CD14-positive monocyte (primary cell): ENCODE measurements at regions of chr12 and their contacts with region 1.

Region 1: DNA sequence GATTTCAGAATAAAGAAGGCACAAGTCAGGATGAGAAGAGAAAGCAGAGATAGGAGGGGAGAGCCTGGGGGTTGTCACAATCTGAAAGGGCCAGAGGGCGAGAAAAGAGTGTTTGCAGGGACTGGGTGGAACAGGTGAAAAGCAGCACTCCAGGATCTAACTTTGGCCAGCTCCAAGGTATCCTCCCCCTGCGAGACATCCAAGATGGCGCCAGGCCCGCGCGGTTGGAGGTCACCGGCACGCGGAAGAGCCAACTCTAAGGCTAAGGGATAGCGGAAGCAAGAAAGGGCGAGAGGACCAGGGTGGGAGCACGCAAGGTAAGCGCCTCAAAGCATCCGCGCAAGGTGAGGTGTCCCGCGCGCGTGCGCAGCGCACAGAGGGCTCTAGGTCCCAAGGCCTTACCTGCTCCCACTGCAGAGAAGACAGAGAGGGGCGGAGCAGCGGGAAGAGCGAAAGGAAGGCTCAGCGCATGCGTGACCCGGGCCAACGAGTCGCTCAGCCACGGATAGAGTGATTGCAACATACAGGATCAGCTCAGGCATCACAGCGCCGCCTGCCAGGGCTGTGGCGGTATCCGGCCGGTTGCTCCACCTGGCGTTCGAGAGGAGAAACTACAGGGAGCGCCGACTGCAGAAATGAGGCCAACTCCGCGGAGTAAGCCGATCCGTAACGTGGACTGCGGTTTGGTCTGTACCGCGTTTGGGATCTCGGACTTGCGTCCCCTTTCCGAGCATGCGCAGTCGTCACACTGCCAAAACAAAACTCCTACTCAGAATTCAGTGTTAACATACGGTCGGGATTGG is at the start of gene ATP5MC2:
- DNase-seq: peak; percentile 98 to 99 (median 99)
- H3K4me3 ChIP-seq: peak within 1 kb of the TSS; percentile 54 to 87 (median 78)
- H3K4me3 Mint-ChIP-seq: peak within 1 kb of the TSS; percentile 96 to 99
- H3K27ac ChIP-seq: peak within 1 kb of the TSS; percentile 81 to 96
- H3K27ac Mint-ChIP-seq: peak within 1 kb of the TSS; percentile 96 to 99 (median 97)
- H3K4me1 ChIP-seq: peaks cover 16 to 28% of the 10 kb centered on the region in 2 donors
- H3K4me1 Mint-ChIP-seq: peaks cover 31% of the 10 kb centered on the region
- H3K27me3 ChIP-seq: peaks cover 7 to 9% of the 10 kb centered on the region in 2 donors
- H3K27me3 Mint-ChIP-seq: peaks cover 10 to 28% (median 10%) of the 10 kb centered on the region in 3 donors
- CTCF ChIP-seq: peak; percentile 98
- polyA plus RNA-seq, gene ATP5MC2: 498 to 587 (median 522) TPM

Region 2: GRCh38 chr12:53451661-53452158 is 224.1 kb before region 1 on chr12 and contains the start of gene PCBP2:
- intact Hi-C with region 1: loop called in 1 of 2 experiments (anchors 5 kb)
- DNase-seq: peak; percentile 98 to 99 (median 98)
- H3K4me3 ChIP-seq: peak within 1 kb of the TSS; percentile 80 to 95 (median 87)
- H3K4me3 Mint-ChIP-seq: peak within 1 kb of the TSS; percentile 94 to 99
- H3K27ac ChIP-seq: peak within 1 kb of the TSS; percentile 85 to 91
- H3K27ac Mint-ChIP-seq: peak within 1 kb of the TSS; percentile 96 to 99 (median 99)
- H3K4me1 ChIP-seq: peaks cover 12 to 17% of the 10 kb centered on the region in 2 donors
- H3K4me1 Mint-ChIP-seq: peaks cover 19% of the 10 kb centered on the region
- H3K27me3 ChIP-seq: no peaks in the 10 kb centered on the region
- H3K27me3 Mint-ChIP-seq: peaks cover 0 to 4% (median 0%) of the 10 kb centered on the region in 3 donors
- CTCF ChIP-seq: peak; percentile 81
- polyA plus RNA-seq, gene PCBP2: 79.6 to 588 (median 81.9) TPM

Region 3: GRCh38 chr12:53543539-53543938 is 132.3 kb before region 1 on chr12:
- intact Hi-C with region 1: loop called (anchors 1 to 5 kb)
- DNase-seq: peak; percentile 35 to 51 (median 37)
- H3K4me3 ChIP-seq: no peak overlapping the region
- H3K4me3 Mint-ChIP-seq: no peak overlapping the region
- H3K27ac ChIP-seq: peak overlapping the region in 1 of 2 donors; percentile 67
- H3K27ac Mint-ChIP-seq: peak overlapping the region in 4 of 7 donors; percentile 30 to 73 (median 38)
- H3K4me1 ChIP-seq: no peaks in the 10 kb centered on the region
- H3K4me1 Mint-ChIP-seq: peaks cover 2% of the 10 kb centered on the region
- H3K27me3 ChIP-seq: no peaks in the 10 kb centered on the region
- H3K27me3 Mint-ChIP-seq: no peaks in the 10 kb centered on the region
- CTCF ChIP-seq: peak; percentile 79

Region 4: GRCh38 chr12:53601296-53601847 is 74.5 kb before region 1 on chr12:
- intact Hi-C with region 1: loop called in 1 of 2 experiments (anchors 5 kb)
- DNase-seq: no peak
- H3K4me3 ChIP-seq: peak overlapping the region; percentile 25 to 75 (median 58)
- H3K4me3 Mint-ChIP-seq: peak overlapping the region; percentile 82 to 92
- H3K27ac ChIP-seq: peak overlapping the region in 1 of 2 donors; percentile 64
- H3K27ac Mint-ChIP-seq: peak overlapping the region in 6 of 7 donors; percentile 31 to 78 (median 60)
- H3K4me1 ChIP-seq: peaks cover 25 to 29% of the 10 kb centered on the region in 2 donors
- H3K4me1 Mint-ChIP-seq: peaks cover 41% of the 10 kb centered on the region
- H3K27me3 ChIP-seq: no peaks in the 10 kb centered on the region
- H3K27me3 Mint-ChIP-seq: no peaks in the 10 kb centered on the region
- CTCF ChIP-seq: no peak

Region 5: DNA sequence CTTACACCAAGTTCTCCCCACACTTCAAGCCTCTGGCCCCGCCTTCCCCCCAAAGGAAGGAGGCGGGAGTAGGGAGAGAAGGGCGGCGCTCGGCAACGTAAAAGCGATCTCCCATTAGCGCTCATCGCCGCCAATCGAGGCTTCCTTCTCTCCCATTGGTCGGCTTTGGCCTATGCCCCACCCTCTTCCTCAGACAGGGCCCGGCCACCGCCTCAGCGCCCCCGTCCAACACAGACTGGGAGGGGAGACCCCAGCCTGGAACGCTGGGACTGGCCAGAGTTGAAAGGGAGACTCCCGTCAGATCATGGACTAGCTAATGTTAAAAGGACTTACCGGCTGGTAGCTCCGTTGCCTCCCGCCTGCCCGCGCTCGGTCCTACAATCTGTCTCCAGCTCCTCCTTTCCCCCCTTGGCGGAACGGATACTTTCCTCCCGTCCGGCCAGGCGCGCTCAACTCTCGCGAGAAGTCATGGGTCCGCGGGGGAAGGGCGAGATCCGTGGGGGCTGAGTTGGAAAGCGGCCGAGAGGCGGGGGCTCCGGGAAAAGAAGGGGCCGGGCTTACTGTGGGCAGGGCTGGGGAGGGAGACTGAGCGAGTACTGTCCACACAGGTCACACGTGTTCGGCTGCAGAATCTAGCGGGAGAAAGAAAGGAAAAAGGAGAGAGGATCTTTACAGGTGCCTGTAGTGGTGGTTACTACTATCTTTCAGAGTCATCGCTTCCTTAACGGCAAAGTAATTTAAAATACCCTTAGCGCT is 49.7 kb before region 1 on chr12 and contains the start of gene ATF7:
- intact Hi-C with region 1: loop called (anchors 2 to 10 kb)
- DNase-seq: peak; percentile 97 to 98 (median 97)
- H3K4me3 ChIP-seq: peak within 1 kb of the TSS; percentile 81 to 100 (median 99)
- H3K4me3 Mint-ChIP-seq: peak within 1 kb of the TSS; percentile 91 to 98
- H3K27ac ChIP-seq: peak within 1 kb of the TSS; percentile 75 to 94
- H3K27ac Mint-ChIP-seq: peak within 1 kb of the TSS; percentile 91 to 100 (median 98)
- H3K4me1 ChIP-seq: peaks cover 37 to 42% of the 10 kb centered on the region in 2 donors
- H3K4me1 Mint-ChIP-seq: peaks cover 47% of the 10 kb centered on the region
- H3K27me3 ChIP-seq: no peaks in the 10 kb centered on the region
- H3K27me3 Mint-ChIP-seq: peaks cover 0 to 2% (median 1%) of the 10 kb centered on the region in 3 donors
- CTCF ChIP-seq: no peak
- polyA plus RNA-seq, gene ATF7: 21.7 to 27.9 (median 24.4) TPM